ENCODE measurements at regions of chr6 and their contacts with region 1.

Region 1: DNA sequence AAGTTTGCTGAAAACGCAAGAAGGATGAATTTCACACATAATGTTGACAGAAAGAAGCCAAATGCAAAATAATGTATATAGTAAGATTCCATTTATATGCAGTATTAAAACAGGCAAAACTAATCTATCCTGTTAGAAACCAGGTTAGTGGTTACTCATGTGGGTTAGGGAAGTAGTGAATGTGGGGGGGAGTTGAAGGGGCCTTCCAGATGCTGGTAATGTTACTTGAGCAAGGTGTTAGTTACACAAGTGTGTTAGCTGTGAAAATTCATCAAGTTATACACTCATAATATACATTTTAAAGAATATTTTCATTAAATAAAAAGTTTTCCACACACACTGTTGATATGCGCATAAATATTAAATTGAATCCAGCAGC is 29.8 kb downstream of the USP45 start:
- DNase-seq: peak; percentile 45
- ATAC-seq: no peak
- H3K4me3 ChIP-seq: peak overlapping the region in 3 of 5 experiments; percentile 10 to 26 (median 26)
- H3K4me3 Mint-ChIP-seq: peak overlapping the region; percentile 71
- H3K27ac ChIP-seq: peak overlapping the region; percentile 77 to 78
- H3K27ac Mint-ChIP-seq: peak overlapping the region; percentile 90
- H3K4me1 ChIP-seq: peaks cover 20 to 26% of the 10 kb centered on the region in 2 donors
- H3K4me1 Mint-ChIP-seq: peaks cover 27% of the 10 kb centered on the region
- H3K27me3 ChIP-seq: no peaks in the 10 kb centered on the region
- H3K27me3 Mint-ChIP-seq: no peaks in the 10 kb centered on the region
- CTCF ChIP-seq: no peak

Region 2: DNA sequence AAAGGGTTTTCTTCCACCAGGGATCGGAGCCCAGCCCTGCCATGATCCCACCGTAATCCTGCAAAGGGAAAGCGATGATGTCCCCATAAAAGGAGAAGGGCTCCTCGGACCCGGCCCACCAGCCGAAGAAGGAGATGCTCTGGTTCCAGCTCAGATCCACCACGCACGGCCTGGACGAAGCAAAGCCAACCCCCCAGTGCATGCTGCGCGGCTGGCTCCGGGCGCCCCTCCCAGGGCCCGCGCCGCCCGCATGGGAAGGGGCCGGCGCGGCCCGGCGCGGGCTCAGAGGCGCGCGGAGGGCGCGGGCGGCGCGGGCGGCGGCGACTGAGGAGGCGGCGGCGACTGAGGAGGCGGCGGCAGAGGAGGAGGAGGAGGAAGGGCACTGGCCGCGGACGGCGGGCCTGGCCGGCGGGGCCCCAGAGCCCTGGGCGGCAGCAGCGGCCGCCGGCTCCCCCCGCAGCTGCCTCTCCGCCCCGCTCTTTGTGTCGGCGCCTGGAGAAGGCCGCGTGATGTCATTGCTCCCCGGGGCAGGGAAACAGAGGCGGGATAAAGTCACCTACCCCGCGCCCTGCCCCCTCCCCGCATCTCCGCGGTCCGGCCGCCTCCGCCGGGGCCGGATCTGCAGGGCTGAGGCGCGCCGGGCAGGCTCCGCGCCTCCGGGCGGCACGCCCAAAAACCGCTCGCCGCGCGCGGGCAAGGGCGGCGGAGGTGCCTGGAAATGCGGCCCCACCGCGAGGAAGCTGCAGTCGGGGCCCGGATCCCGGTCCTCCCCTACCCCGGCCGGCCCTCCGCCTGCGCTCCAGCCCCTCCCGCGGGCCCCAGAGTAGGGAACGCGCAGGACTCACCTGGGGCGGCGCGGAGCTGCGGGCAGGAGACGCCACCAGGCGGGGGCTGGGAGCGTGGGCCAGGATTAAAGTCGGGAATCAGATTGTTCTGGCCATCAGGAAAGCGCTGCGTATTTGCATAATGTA is 135.9 kb before region 1 on chr6 and contains the start of gene FAXC:
- CTCF ChIA-PET with region 1: no interaction called
- POLR2A ChIA-PET with region 1: no interaction called
- intact Hi-C with region 1: no loop called
- DNase-seq: peak; percentile 5
- ATAC-seq: no peak
- H3K4me3 ChIP-seq: peak within 1 kb of the TSS in 3 of 5 experiments; percentile 2 to 24 (median 15)
- H3K4me3 Mint-ChIP-seq: peak within 1 kb of the TSS; percentile 57
- H3K27ac ChIP-seq: no peak within 1 kb of the TSS
- H3K27ac Mint-ChIP-seq: no peak within 1 kb of the TSS
- H3K4me1 ChIP-seq: peaks cover 4 to 6% of the 10 kb centered on the region in 2 donors
- H3K4me1 Mint-ChIP-seq: peaks cover 4% of the 10 kb centered on the region
- H3K27me3 ChIP-seq: peaks cover 0 to 46% (median 26%) of the 10 kb centered on the region in 4 experiments
- H3K27me3 Mint-ChIP-seq: peaks cover 62% of the 10 kb centered on the region
- CTCF ChIP-seq: no peak
- total RNA-seq, gene FAXC: not detected in 2 replicates

Region 3: GRCh38 chr6:99514089-99514488 is 28.7 kb after region 1 on chr6:
- CTCF ChIA-PET with region 1: interaction called, 4 read pairs
- POLR2A ChIA-PET with region 1: interaction called, 24 read pairs
- intact Hi-C with region 1: loop called (anchors 1 kb)
- DNase-seq: peak; percentile 13
- ATAC-seq: no peak
- H3K4me3 ChIP-seq: no peak overlapping the region
- H3K4me3 Mint-ChIP-seq: peak overlapping the region; percentile 86
- H3K27ac ChIP-seq: peak overlapping the region in 1 of 2 donors; percentile 85
- H3K27ac Mint-ChIP-seq: peak overlapping the region; percentile 97
- H3K4me1 ChIP-seq: peaks cover 14 to 15% of the 10 kb centered on the region in 2 donors
- H3K4me1 Mint-ChIP-seq: peaks cover 34% of the 10 kb centered on the region
- H3K27me3 ChIP-seq: no peaks in the 10 kb centered on the region
- H3K27me3 Mint-ChIP-seq: no peaks in the 10 kb centered on the region
- CTCF ChIP-seq: no peak

Region 4: GRCh38 chr6:99520855-99521632 is 35.7 kb after region 1 on chr6:
- CTCF ChIA-PET with region 1: interaction called, 7 read pairs
- POLR2A ChIA-PET with region 1: interaction called, 24 read pairs
- intact Hi-C with region 1: loop called (anchors 2 kb)
- DNase-seq: peak; percentile 79
- ATAC-seq: peak; percentile 86
- H3K4me3 ChIP-seq: peak overlapping the region; percentile 77 to 97 (median 79)
- H3K4me3 Mint-ChIP-seq: peak overlapping the region; percentile 99
- H3K27ac ChIP-seq: peak overlapping the region; percentile 54 to 62
- H3K27ac Mint-ChIP-seq: peak overlapping the region; percentile 98
- H3K4me1 ChIP-seq: peaks cover 11 to 15% of the 10 kb centered on the region in 2 donors
- H3K4me1 Mint-ChIP-seq: peaks cover 39% of the 10 kb centered on the region
- H3K27me3 ChIP-seq: no peaks in the 10 kb centered on the region
- H3K27me3 Mint-ChIP-seq: no peaks in the 10 kb centered on the region
- CTCF ChIP-seq: peak; percentile 96